BJ (cell line): ENCODE measurements at regions of chr2 and their contacts with region 1.

Region 1: DNA sequence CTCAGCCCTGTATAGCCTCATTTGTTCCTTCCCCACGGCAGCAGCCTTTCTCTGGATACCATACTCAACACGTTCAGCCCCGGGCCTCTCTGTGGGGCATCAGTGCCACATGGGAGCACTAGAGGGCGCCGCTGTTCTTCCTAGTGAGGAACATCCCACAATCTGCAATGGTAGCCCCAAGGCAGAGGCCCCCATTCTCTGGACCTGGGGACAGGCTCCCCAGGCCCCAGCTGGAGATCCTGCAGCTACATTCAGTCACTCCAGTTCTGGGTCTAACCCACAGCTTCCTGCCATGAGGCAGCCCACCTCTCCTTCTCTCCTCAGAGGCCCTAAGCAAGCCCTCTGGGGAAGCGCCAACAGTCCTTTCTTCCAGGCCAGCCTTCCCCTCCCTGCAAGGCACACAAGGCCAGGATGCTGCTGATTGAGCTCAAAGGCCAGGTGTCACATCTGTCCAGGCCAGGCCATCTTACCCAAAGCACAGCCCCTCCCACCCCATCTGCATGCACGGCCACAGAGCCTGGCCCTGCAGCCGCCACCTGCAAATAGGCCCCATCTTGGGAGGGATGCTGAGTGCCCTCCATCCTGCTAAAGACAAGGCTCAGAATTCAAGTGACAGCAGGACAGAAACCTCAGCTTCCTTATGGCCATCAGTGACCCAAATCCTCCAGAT is 14.3 kb upstream of the SFXN5 start:
- DNase-seq: no peak
- H3K4me3 ChIP-seq: no peak overlapping the region
- H3K27me3 ChIP-seq: no peaks in the 10 kb centered on the region
- CTCF ChIP-seq: peak; percentile 98

Region 2: GRCh38 chr2:72993147-72993932 is 92.5 kb before region 1 on chr2:
- CTCF ChIA-PET with region 1: interaction called, 15 read pairs
- POLR2A ChIA-PET with region 1: no interaction called
- DNase-seq: no peak
- H3K4me3 ChIP-seq: no peak overlapping the region
- H3K27me3 ChIP-seq: no peaks in the 10 kb centered on the region
- CTCF ChIP-seq: peak; percentile 71

Region 3: GRCh38 chr2:72999729-73000725 is 85.8 kb before region 1 on chr2:
- CTCF ChIA-PET with region 1: interaction called, 10 read pairs
- POLR2A ChIA-PET with region 1: no interaction called
- DNase-seq: no peak
- H3K4me3 ChIP-seq: no peak overlapping the region
- H3K27me3 ChIP-seq: no peaks in the 10 kb centered on the region
- CTCF ChIP-seq: no peak

Region 4: GRCh38 chr2:73071360-73072133 is 14.3 kb before region 1 on chr2 and contains the start of gene SFXN5:
- CTCF ChIA-PET with region 1: interaction called, 41 read pairs
- POLR2A ChIA-PET with region 1: no interaction called
- DNase-seq: peak; percentile 57
- H3K4me3 ChIP-seq: peak within 1 kb of the TSS; percentile 84
- H3K27me3 ChIP-seq: no peaks in the 10 kb centered on the region
- CTCF ChIP-seq: peak; percentile 37
- polyA plus RNA-seq, gene SFXN5: 10.8 and 11.5 TPM in 2 replicates

Region 5: GRCh38 chr2:73107211-73107926 is 21.5 kb after region 1 on chr2:
- CTCF ChIA-PET with region 1: interaction called, 24 read pairs
- POLR2A ChIA-PET with region 1: no interaction called
- DNase-seq: no peak
- H3K4me3 ChIP-seq: no peak overlapping the region
- H3K27me3 ChIP-seq: no peaks in the 10 kb centered on the region
- CTCF ChIP-seq: no peak

Region 6: DNA sequence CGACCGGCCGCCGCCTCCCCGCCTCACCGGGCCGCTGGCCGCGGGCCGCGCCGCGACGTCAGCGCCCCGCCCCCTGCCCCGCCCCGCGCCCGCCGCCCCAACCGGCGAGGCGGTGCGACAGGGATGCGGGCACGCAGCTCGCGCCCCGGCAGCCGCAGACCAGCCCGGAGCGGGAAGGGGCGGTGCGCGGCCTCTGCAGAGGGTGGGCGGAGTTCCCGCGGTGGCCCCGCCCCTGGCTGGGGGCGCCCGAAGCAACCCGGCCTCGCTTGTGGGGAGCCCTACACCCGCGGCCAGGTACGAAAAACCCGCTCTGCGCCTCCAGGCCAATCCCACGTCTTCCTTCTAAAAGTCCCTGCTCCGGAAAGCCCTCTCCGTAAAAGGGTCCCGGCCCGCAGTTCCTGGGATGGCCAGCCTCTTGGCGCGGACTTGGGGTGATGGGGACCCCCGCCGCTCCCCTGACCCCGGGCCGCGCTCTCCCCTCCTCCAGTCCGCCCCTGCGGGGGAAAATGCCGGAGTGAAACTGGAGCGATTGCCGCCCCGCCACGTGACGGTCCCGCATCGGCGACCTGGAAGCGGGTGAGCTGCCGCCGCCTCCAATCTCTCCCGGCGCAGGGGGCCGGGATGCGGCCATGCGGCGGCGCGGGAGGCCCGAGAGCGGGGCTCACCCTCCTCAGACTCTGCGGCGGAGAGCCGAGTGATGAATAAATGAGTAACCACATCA is 27.2 kb after region 1 on chr2 and contains the start of gene RAB11FIP5:
- CTCF ChIA-PET with region 1: interaction called, 24 read pairs
- POLR2A ChIA-PET with region 1: no interaction called
- DNase-seq: no peak
- H3K4me3 ChIP-seq: peak within 1 kb of the TSS; percentile 69
- H3K27me3 ChIP-seq: no peaks in the 10 kb centered on the region
- CTCF ChIP-seq: peak; percentile 5; the same call in 1 of the 2 replicates
- polyA plus RNA-seq, gene RAB11FIP5: 42.5 and 52.0 TPM in 2 replicates

Region 7: DNA sequence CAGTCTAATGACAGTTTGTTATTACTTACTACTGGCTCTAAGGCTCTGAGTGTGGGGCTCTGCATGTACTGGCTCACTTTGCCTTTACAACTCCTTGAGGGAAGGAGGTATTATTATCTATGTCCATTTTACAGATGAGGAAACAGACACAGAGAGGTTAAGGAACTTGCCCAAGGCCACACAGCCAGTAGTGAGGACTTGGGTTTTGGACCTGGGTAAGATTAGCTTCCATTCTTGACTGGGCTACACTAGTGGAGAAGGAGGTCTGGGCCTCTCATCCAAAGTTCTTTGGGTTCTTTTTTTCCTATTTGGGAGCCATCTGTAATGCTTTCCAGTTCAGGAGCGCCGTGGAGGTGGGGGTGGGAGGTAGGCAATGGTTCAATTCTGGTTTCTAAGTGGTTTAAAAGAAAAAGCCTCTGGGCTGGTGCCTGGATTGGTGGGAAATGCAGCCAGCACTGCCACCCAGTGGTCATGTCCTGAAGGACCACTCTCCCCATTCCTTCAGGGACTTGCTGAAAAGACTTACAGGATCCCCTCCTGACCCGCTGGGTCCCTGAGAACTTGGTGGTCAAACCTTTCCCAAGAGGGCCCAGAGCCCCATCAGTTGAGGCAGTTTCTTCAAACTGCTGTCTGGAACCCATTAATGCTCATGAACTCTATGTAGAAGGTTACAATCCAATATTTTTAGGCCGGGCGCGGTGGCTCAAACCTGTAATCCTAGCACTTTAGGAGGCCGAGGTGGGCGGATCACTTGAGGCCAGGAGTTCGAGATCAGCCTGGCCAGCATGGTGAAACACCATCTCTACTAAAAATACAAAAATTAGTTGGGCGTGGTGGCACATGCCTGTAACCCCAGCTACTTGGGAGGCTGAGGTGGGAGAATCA is 77.9 kb after region 1 on chr2:
- CTCF ChIA-PET with region 1: interaction called, 326 read pairs
- POLR2A ChIA-PET with region 1: no interaction called
- DNase-seq: no peak
- H3K4me3 ChIP-seq: no peak overlapping the region
- H3K27me3 ChIP-seq: peaks cover 6% of the 10 kb centered on the region
- CTCF ChIP-seq: peak; percentile 85